Aorta (tissue), 5 donors: ENCODE measurements at regions of chr17 and their contacts with region 1.

Region 1: GRCh38 chr17:42422958-42423712 is at the start of gene CAVIN1:
- DNase-seq: peak; percentile 98 to 100
- ATAC-seq: peak; percentile 94
- H3K4me3 ChIP-seq: peak within 1 kb of the TSS; percentile 71 to 79
- H3K27ac ChIP-seq: peak within 1 kb of the TSS; percentile 93 to 98
- H3K4me1 ChIP-seq: peaks cover under 1 to 3% of the 10 kb centered on the region in 2 donors
- H3K27me3 ChIP-seq: no peaks in the 10 kb centered on the region
- total RNA-seq, gene CAVIN1: 569 to 643 TPM

Region 2: GRCh38 chr17:42276359-42276608 is 146.9 kb before region 1 on chr17 and contains the start of gene STAT5B:
- intact Hi-C with region 1: no loop called
- DNase-seq: peak; percentile 77 to 91
- ATAC-seq: peak; percentile 88
- H3K4me3 ChIP-seq: peak within 1 kb of the TSS; percentile 69 to 95
- H3K27ac ChIP-seq: peak within 1 kb of the TSS in 1 of 2 donors; percentile 37
- H3K4me1 ChIP-seq: peaks cover 0 to 4% of the 10 kb centered on the region in 2 donors
- H3K27me3 ChIP-seq: no peaks in the 10 kb centered on the region
- total RNA-seq, gene STAT5B: 78.0 to 106 TPM

Region 3: GRCh38 chr17:42459256-42459800 is 36.2 kb after region 1 on chr17:
- intact Hi-C with region 1: loop called in 1 of 2 experiments (anchors 5 kb)
- DNase-seq: peak; percentile 59 to 84
- ATAC-seq: peak; percentile 59
- H3K4me3 ChIP-seq: peak overlapping the region; percentile 65 to 66
- H3K27ac ChIP-seq: peak overlapping the region; percentile 61 to 87
- H3K4me1 ChIP-seq: peaks cover 0 to 7% of the 10 kb centered on the region in 2 donors
- H3K27me3 ChIP-seq: no peaks in the 10 kb centered on the region